ENCODE measurements at regions of chr1 and their contacts with region 1.

Region 1: DNA sequence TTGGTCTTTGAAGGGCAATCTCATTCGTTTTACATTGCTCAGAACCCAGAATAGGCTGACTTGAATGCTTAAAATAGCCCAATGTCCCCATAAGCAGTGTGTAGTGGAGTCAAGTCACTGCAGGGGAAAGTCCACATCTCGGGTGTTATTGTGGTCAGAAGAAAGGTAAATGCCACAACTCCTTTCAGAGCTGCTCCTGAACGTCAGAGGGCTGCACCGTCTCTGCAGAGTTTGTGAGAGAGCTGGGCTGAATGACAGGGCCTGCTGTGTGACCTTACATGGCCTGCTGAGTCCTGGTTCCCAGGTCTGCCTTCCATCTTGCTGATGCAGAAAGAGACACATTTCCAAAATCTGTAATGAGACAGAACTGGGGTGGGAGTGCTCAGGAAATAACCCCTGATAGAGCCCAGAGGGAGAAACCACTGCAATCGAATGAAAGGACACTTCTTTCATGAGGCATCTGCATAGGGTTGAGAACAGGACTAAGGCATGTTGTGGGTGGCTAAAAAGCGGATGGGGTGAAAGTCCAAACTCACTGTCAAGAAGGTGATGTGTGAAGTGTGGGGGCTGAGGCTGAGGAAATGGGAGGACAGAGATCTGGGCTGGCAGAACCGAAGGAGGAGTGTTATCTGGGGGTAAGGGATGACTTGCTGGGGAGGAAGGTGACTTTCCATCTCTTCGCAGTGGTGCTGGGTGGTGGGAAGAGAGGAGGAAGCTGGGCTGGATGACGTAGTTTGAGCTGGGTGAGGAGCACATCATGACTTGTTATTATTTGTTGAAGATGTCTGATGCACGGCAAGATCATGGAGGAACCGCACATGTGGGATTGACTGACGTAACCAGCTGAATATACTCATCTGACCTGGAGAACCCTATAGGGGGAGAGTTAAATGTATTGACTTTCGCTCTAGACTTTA is 33.7 kb downstream of the XCL2 start:
- DNase-seq: peak; percentile 88
- ATAC-seq: peak; percentile 90
- H3K4me3 ChIP-seq: no peak overlapping the region
- H3K27ac ChIP-seq: peak overlapping the region; percentile 61
- H3K4me1 ChIP-seq: peaks cover 16% of the 10 kb centered on the region
- H3K27me3 ChIP-seq: no peaks in the 10 kb centered on the region
- CTCF ChIP-seq: no peak
- EP300 ChIP-seq: peak; percentile 12 to 64; a peak in 3 of 4 replicates
- POLR2A ChIP-seq: no peak
- RAD21 ChIP-seq: no peak; the same call in 1 of the 2 replicates

Region 2: DNA sequence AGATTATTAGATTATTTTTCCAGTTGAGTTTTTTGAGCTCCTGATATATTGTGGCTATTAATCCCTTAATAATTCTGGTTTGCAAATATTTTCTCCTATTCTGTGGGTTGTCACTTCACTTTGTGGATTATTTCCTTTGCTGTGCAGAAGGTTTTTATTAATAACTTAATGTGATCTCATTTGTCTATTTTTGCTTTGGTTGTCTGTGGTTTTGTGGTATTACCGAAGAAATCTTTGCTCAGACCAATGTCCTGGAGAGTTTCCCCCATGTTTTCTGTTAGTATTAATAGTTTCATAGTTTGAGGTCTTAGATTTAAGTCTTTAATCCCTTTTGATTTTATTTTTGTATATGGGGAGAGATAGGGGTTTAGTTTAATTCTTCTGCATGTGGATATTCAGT is 236.6 kb before region 1 on chr1:
- CTCF ChIA-PET with region 1: no interaction called
- POLR2A ChIA-PET with region 1: no interaction called
- RAD21 ChIA-PET with region 1: no interaction called
- SMC1A ChIA-PET with region 1: no interaction called
- in situ Hi-C with region 1: no loop called
- intact Hi-C with region 1: no loop called
- DNase-seq: no peak
- ATAC-seq: peak; percentile 16; the same call in 1 of the 3 replicates
- H3K4me3 ChIP-seq: no peak overlapping the region
- H3K27ac ChIP-seq: no peak overlapping the region
- H3K4me1 ChIP-seq: no peaks in the 10 kb centered on the region
- H3K27me3 ChIP-seq: no peaks in the 10 kb centered on the region
- CTCF ChIP-seq: no peak
- EP300 ChIP-seq: no peak
- POLR2A ChIP-seq: no peak
- RAD21 ChIP-seq: no peak

Region 3: DNA sequence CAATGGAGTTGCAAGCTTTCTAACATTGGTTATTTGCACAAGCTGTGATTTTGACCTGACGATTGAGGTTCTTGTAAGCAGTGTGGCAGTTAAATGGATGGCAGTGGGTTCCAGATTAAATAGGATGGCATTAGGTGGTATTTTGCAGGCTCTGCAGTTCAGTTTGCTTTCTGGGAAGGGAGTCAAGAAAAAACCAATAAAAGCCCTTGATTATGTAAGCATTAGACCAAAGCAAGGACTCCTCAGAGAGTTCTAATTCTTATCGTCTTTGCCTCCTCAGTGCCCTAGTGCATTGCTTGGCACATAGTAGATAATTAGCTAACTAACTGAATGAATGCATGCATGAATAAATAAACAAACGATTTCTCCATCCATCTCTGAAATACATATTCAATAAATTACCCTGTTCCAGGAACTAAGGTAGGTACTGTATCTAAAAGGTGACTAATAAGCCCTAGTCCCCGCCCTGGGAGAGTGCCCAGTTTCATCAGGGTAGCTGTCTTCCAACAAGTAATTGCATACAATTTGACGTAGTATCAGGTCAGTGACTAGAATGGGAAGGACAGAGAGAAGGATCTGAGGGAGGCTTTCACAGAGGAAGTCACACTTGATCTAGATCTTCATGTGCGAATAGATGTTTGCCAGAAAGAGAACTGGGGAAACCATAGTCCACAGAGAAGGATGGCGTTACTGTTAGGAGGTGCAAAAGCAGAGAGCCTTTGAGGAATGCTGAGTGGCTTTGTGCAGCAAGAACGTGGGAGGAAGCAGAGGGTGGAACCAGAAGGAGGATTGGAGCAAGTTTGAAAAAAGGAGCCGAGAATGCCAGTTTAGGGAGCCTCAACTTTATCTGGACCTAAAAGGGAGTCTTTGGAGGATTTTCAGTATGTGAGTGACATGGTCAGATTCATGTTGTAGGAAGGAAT is 118.1 kb before region 1 on chr1:
- CTCF ChIA-PET with region 1: no interaction called
- POLR2A ChIA-PET with region 1: no interaction called
- RAD21 ChIA-PET with region 1: no interaction called
- SMC1A ChIA-PET with region 1: no interaction called
- in situ Hi-C with region 1: no loop called
- intact Hi-C with region 1: no loop called
- DNase-seq: no peak
- ATAC-seq: no peak
- H3K4me3 ChIP-seq: no peak overlapping the region
- H3K27ac ChIP-seq: no peak overlapping the region
- H3K4me1 ChIP-seq: no peaks in the 10 kb centered on the region
- H3K27me3 ChIP-seq: no peaks in the 10 kb centered on the region; a peak in 1 of 4 replicates
- CTCF ChIP-seq: no peak
- EP300 ChIP-seq: no peak
- POLR2A ChIP-seq: no peak
- RAD21 ChIP-seq: no peak

Region 4: GRCh38 chr1:168452329-168452728 is 57.8 kb before region 1 on chr1:
- CTCF ChIA-PET with region 1: interaction called, 3 read pairs
- POLR2A ChIA-PET with region 1: interaction called, 4 read pairs
- RAD21 ChIA-PET with region 1: interaction called, 114 read pairs
- SMC1A ChIA-PET with region 1: interaction called, 136 read pairs
- in situ Hi-C with region 1: no loop called
- intact Hi-C with region 1: no loop called
- DNase-seq: no peak
- ATAC-seq: peak; percentile 63
- H3K4me3 ChIP-seq: no peak overlapping the region
- H3K27ac ChIP-seq: no peak overlapping the region
- H3K4me1 ChIP-seq: no peaks in the 10 kb centered on the region
- H3K27me3 ChIP-seq: no peaks in the 10 kb centered on the region
- CTCF ChIP-seq: peak; percentile 24 to 32 (median 29); a peak in 2 of 6 replicates
- EP300 ChIP-seq: no peak
- POLR2A ChIP-seq: no peak
- RAD21 ChIP-seq: peak; percentile 42

Region 5: DNA sequence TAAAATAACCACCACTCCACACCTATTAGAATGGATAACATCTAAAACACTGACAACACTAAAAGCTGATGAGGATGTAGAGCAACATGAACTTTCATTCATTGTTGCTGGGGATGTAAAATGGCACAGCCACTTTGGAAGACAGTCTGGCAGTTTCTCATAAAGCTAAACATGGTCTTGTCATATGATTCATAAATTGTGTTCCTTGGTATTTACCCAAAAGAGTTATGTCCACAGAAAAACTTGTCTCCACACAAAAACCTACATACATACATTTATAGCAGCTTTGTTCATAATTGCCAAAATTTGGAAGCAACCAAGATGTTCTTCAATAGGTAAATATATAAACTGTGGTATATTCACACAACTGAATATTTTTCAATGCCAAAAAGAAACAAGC is 50.2 kb after region 1 on chr1:
- CTCF ChIA-PET with region 1: interaction called, 10 read pairs
- POLR2A ChIA-PET with region 1: interaction called, 56 read pairs
- RAD21 ChIA-PET with region 1: interaction called, 218 read pairs
- SMC1A ChIA-PET with region 1: interaction called, 257 read pairs
- in situ Hi-C with region 1: no loop called
- intact Hi-C with region 1: loop called (anchors 2 kb)
- DNase-seq: no peak
- ATAC-seq: no peak
- H3K4me3 ChIP-seq: no peak overlapping the region
- H3K27ac ChIP-seq: no peak overlapping the region
- H3K4me1 ChIP-seq: no peaks in the 10 kb centered on the region
- H3K27me3 ChIP-seq: no peaks in the 10 kb centered on the region
- CTCF ChIP-seq: no peak
- EP300 ChIP-seq: no peak
- POLR2A ChIP-seq: no peak
- RAD21 ChIP-seq: no peak

Region 6: DNA sequence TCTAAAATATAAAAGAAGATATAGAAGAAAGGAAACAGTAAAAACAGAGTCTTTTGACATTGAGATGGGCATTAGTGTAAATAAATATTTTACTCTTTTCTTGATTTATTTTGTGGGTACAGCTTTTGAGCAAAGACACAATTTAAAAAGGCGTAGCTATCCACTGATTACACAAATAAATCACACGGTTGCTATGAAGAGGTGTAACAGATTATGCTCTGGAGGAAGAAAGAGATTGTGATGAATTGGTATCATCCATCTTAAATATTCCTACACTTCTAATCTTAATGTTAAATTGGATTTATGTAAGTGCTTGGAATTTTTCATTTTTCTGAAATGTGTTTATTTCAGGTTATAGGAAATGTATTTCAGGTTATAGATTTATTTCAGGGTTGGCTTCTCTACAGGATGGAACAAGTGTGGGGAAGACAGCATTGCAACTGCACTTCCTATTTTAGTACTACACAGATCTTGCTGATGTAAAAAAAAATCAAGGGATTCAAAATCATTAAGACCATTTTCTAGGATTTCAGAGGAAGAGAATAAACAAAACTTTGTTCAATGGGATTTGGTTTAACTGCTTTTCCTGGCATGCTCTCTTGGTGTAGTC is 81.6 kb after region 1 on chr1:
- CTCF ChIA-PET with region 1: no interaction called
- POLR2A ChIA-PET with region 1: no interaction called
- RAD21 ChIA-PET with region 1: no interaction called
- SMC1A ChIA-PET with region 1: no interaction called
- in situ Hi-C with region 1: no loop called
- intact Hi-C with region 1: no loop called
- DNase-seq: no peak
- ATAC-seq: no peak
- H3K4me3 ChIP-seq: no peak overlapping the region
- H3K27ac ChIP-seq: no peak overlapping the region
- H3K4me1 ChIP-seq: no peaks in the 10 kb centered on the region
- H3K27me3 ChIP-seq: no peaks in the 10 kb centered on the region
- CTCF ChIP-seq: no peak
- EP300 ChIP-seq: no peak
- POLR2A ChIP-seq: no peak
- RAD21 ChIP-seq: no peak

Measured in GM12878 (cell line).